CD8-positive, alpha-beta T cell (primary cell): ENCODE measurements at regions of chr16 and their contacts with region 1.

Region 1: GRCh38 chr16:1971796-1972489 is at the start of gene TBL3:
- DNase-seq: peak; percentile 91 to 99 (median 97)
- ATAC-seq: peak; percentile 96
- H3K4me3 ChIP-seq: peak within 1 kb of the TSS; percentile 76 to 91
- H3K4me3 Mint-ChIP-seq: peak within 1 kb of the TSS; percentile 93
- H3K27ac ChIP-seq: peak within 1 kb of the TSS; percentile 86 to 94
- H3K27ac Mint-ChIP-seq: peak within 1 kb of the TSS; percentile 97
- H3K4me1 ChIP-seq: peaks cover 17% of the 10 kb centered on the region
- H3K4me1 Mint-ChIP-seq: peaks cover 16% of the 10 kb centered on the region
- H3K27me3 ChIP-seq: no peaks in the 10 kb centered on the region
- H3K27me3 Mint-ChIP-seq: no peaks in the 10 kb centered on the region
- CTCF ChIP-seq: no peak
- total RNA-seq, gene TBL3: 15.4 to 16.6 TPM

Region 2: GRCh38 chr16:1929578-1930337 is 42.2 kb before region 1 on chr16:
- CTCF ChIA-PET with region 1: no interaction called
- POLR2A ChIA-PET with region 1: no interaction called
- intact Hi-C with region 1: loop called in 1 of 2 experiments (anchors 1 kb)
- DNase-seq: peak; percentile 85 to 97 (median 92)
- ATAC-seq: peak; percentile 100
- H3K4me3 ChIP-seq: peak overlapping the region; percentile 41
- H3K4me3 Mint-ChIP-seq: peak overlapping the region; percentile 82
- H3K27ac ChIP-seq: no peak overlapping the region
- H3K27ac Mint-ChIP-seq: no peak overlapping the region
- H3K4me1 ChIP-seq: no peaks in the 10 kb centered on the region
- H3K4me1 Mint-ChIP-seq: peaks cover 2% of the 10 kb centered on the region
- H3K27me3 ChIP-seq: peaks cover 0 to 3% of the 10 kb centered on the region in 2 experiments
- H3K27me3 Mint-ChIP-seq: no peaks in the 10 kb centered on the region
- CTCF ChIP-seq: peak; percentile 99

Region 3: DNA sequence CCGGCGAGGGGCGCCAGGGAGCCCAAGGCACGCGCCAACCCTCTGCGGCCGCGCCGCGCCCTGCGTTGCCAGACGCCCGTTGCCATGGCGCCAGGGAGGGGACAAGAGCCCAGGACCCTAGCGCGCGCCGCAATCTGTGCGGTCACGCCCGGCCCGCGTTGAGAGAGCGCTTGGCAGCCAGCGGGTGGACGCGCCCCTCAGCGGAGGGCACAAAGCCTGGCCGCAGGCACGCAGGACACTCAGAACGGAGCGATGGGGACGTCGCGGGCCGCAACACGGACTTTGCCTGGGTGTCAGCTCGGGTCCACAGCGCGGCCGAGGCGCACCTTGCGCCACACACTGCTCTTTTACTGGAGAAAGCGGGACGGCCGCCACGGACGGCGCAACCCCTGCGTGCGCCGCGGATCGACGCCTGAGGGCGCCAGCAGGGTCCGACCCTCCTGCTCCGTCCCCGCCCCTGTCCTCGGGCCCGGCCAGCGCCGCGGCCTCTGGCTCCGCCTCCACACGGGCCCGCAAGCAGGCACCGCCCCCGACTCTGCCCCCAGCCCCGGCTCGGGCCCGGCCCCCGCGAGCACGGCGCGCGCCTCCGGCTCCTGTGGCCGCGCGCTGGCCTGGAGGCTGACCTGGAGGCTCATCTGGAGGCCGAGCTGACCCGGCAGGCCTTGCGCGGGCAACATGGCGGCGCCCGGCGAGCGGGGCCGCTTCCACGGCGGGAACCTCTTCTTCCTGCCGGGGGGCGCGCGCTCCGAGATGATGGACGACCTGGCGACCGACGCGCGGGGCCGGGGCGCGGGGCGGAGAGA is 11.8 kb after region 1 on chr16 and contains the start of gene GFER:
- CTCF ChIA-PET with region 1: interaction called, 3 read pairs
- POLR2A ChIA-PET with region 1: interaction called, 17 read pairs
- intact Hi-C with region 1: no loop called
- DNase-seq: peak; percentile 29 to 84 (median 57)
- ATAC-seq: peak; percentile 79
- H3K4me3 ChIP-seq: peak within 1 kb of the TSS; percentile 60 to 71
- H3K4me3 Mint-ChIP-seq: peak within 1 kb of the TSS; percentile 82
- H3K27ac ChIP-seq: peak within 1 kb of the TSS; percentile 48 to 64
- H3K27ac Mint-ChIP-seq: peak within 1 kb of the TSS; percentile 66
- H3K4me1 ChIP-seq: peaks cover 15% of the 10 kb centered on the region
- H3K4me1 Mint-ChIP-seq: peaks cover 16% of the 10 kb centered on the region
- H3K27me3 ChIP-seq: peaks cover 12 to 30% of the 10 kb centered on the region in 2 experiments
- H3K27me3 Mint-ChIP-seq: peaks cover 22% of the 10 kb centered on the region
- CTCF ChIP-seq: no peak
- total RNA-seq, gene GFER: 15.6 to 16.1 TPM

Region 4: GRCh38 chr16:2009789-2010510 is 38.0 kb after region 1 on chr16 and contains the start of gene ZNF598:
- CTCF ChIA-PET with region 1: no interaction called
- POLR2A ChIA-PET with region 1: no interaction called
- intact Hi-C with region 1: loop called in 1 of 2 experiments (anchors 5 kb)
- DNase-seq: peak; percentile 44 to 92 (median 80)
- ATAC-seq: peak; percentile 93
- H3K4me3 ChIP-seq: peak within 1 kb of the TSS; percentile 71 to 88
- H3K4me3 Mint-ChIP-seq: peak within 1 kb of the TSS; percentile 91
- H3K27ac ChIP-seq: peak within 1 kb of the TSS; percentile 96 to 97
- H3K27ac Mint-ChIP-seq: peak within 1 kb of the TSS; percentile 97
- H3K4me1 ChIP-seq: peaks cover 50% of the 10 kb centered on the region
- H3K4me1 Mint-ChIP-seq: peaks cover 42% of the 10 kb centered on the region
- H3K27me3 ChIP-seq: no peaks in the 10 kb centered on the region
- H3K27me3 Mint-ChIP-seq: no peaks in the 10 kb centered on the region
- CTCF ChIP-seq: no peak
- total RNA-seq, gene ZNF598: 49.0 to 50.8 TPM

Region 5: DNA sequence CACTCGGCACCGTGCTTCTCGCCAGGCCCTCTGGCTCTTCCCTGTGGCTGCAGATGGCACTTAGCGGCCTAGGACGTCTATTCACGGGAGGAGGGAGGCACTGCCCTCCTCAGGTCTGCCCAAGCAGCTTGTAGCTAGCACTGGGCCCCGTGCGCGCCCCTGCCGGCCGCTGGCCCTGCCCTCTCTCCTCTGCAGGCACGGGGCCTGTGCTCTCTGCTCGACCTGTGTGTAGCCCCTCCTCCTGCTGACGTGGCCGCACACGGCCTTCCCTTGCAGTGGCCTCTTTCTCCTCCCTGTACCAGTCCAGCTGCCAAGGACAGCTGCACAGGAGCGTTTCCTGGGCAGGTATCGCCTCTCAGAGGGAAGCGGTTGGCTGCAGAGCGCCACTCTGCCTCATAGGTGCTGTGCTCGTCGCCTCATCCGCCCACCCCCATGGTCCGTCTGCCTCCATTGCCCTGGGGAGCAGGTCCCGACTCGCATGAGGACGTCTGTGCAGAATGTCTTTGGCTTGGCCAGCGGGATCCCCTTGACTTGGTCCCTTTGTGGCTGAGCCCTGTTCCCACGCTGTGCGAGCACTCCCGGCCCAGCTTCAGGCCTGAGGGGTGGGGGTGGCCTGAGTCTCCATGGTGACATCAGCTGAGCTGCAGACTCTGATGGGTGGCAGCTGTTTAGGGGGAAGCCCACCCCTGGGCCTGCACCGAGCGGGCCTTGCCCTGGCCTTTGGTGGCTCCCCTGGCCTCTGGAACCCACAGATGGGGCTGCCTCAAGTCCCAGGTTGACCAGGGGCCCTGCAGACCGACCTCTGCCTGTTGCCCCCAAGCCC is 110.4 kb after region 1 on chr16:
- CTCF ChIA-PET with region 1: no interaction called
- POLR2A ChIA-PET with region 1: no interaction called
- intact Hi-C with region 1: no loop called
- DNase-seq: no peak
- ATAC-seq: no peak
- H3K4me3 ChIP-seq: no peak overlapping the region
- H3K4me3 Mint-ChIP-seq: no peak overlapping the region
- H3K27ac ChIP-seq: no peak overlapping the region
- H3K27ac Mint-ChIP-seq: no peak overlapping the region
- H3K4me1 ChIP-seq: no peaks in the 10 kb centered on the region
- H3K4me1 Mint-ChIP-seq: peaks cover 2% of the 10 kb centered on the region
- H3K27me3 ChIP-seq: no peaks in the 10 kb centered on the region
- H3K27me3 Mint-ChIP-seq: no peaks in the 10 kb centered on the region
- CTCF ChIP-seq: no peak

Region 6: DNA sequence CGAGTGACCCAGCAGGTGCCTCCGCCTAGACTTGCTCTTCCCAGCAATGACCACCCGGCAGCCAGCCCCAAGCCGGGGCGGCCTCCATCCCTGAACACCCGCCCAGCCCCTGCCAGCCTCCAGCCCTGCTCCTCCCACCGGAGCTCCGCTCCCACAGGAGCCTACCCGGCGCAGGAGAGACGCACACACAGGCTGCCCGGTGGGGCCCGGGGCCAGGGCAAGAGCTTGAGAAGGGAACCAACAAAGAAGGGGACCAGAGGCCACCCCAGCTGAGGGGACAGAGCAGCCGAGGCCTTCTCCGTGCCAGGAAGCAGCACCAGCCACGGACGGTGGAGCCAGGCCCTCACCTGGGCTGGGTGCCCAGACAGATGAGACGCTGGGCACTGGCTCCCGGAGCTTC is 149.9 kb after region 1 on chr16:
- CTCF ChIA-PET with region 1: no interaction called
- POLR2A ChIA-PET with region 1: no interaction called
- intact Hi-C with region 1: no loop called
- DNase-seq: no peak
- ATAC-seq: no peak
- H3K4me3 ChIP-seq: no peak overlapping the region
- H3K4me3 Mint-ChIP-seq: no peak overlapping the region
- H3K27ac ChIP-seq: no peak overlapping the region
- H3K27ac Mint-ChIP-seq: no peak overlapping the region
- H3K4me1 ChIP-seq: no peaks in the 10 kb centered on the region
- H3K4me1 Mint-ChIP-seq: peaks cover 8% of the 10 kb centered on the region
- H3K27me3 ChIP-seq: no peaks in the 10 kb centered on the region
- H3K27me3 Mint-ChIP-seq: no peaks in the 10 kb centered on the region
- CTCF ChIP-seq: no peak

Region 7: DNA sequence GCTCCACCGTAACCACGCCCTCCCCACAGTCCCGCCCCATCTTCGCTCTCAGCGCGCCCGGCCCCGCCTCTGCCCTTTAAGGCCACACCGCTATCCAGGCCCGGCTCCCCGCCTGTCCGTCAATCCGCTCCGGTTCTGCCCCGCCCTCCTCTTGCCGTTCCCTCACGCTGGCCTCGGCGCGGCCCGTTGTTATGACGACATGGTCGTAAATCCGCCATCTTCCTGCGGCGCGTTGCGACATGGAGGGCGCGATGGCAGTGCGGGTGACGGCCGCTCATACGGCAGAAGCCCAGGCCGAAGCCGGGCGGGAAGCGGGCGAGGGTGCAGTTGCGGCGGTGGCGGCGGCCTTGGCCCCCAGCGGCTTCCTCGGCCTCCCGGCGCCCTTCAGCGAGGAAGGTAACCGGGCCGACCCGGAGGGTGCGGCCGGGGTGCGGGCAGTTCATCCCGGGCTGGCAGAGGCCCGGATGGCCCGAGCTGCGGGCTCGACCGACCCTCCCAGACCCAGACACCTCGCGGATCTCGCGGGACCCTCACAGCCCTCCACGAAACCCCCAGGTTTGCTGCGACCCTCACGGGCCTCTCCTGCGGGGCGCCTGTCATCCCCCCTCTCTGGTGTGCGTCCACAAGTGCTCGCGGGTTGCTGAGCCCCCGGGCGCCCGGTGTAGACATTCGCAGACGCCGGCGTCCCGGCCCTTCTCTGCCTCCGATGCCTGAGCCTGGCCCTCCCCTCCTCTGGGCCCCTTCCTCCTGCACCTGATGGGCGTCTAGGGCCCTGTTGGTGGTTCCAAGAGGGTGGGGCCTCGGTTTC is 251.6 kb after region 1 on chr16 and contains the start of gene E4F1:
- CTCF ChIA-PET with region 1: no interaction called
- POLR2A ChIA-PET with region 1: no interaction called
- intact Hi-C with region 1: loop called in 1 of 2 experiments (anchors 5 kb)
- DNase-seq: peak; percentile 97 to 100 (median 99)
- ATAC-seq: peak; percentile 96
- H3K4me3 ChIP-seq: peak within 1 kb of the TSS; percentile 81 to 88
- H3K4me3 Mint-ChIP-seq: peak within 1 kb of the TSS; percentile 94
- H3K27ac ChIP-seq: peak within 1 kb of the TSS; percentile 67 to 76
- H3K27ac Mint-ChIP-seq: peak within 1 kb of the TSS; percentile 85
- H3K4me1 ChIP-seq: peaks cover 13% of the 10 kb centered on the region
- H3K4me1 Mint-ChIP-seq: peaks cover 22% of the 10 kb centered on the region
- H3K27me3 ChIP-seq: no peaks in the 10 kb centered on the region
- H3K27me3 Mint-ChIP-seq: no peaks in the 10 kb centered on the region
- CTCF ChIP-seq: no peak
- total RNA-seq, gene E4F1: 36.3 to 37.5 TPM

Region 8: DNA sequence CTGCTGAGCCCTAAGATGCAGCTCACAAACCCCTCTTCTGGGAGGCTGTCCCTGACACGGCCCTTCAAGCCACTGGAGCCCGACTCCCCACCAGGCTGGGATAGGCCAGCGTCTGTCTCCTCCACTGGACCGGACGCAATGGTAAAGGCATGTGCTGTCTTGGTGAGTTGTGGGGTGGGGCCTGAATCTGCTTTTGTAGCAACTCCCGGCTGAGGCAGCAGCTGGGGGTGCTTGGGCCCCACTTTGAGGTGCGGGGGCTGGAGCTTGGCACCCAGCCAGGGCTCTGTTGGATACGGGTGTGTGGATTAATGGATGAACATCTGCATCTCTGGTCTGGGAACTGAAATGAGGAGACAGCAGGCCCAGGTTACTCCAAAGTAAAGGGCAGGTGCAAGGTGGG is 1608.7 kb after region 1 on chr16:
- CTCF ChIA-PET with region 1: no interaction called
- POLR2A ChIA-PET with region 1: no interaction called
- intact Hi-C with region 1: no loop called
- DNase-seq: peak in 1 of 9 experiments; percentile 15
- ATAC-seq: no peak
- H3K4me3 ChIP-seq: no peak overlapping the region
- H3K4me3 Mint-ChIP-seq: no peak overlapping the region
- H3K27ac ChIP-seq: no peak overlapping the region
- H3K27ac Mint-ChIP-seq: peak overlapping the region; percentile 91
- H3K4me1 ChIP-seq: peaks cover 27% of the 10 kb centered on the region
- H3K4me1 Mint-ChIP-seq: peaks cover 34% of the 10 kb centered on the region
- H3K27me3 ChIP-seq: no peaks in the 10 kb centered on the region
- H3K27me3 Mint-ChIP-seq: no peaks in the 10 kb centered on the region
- CTCF ChIP-seq: no peak